ENCODE measurements at regions of chr1 and their contacts with region 1.

Region 1: DNA sequence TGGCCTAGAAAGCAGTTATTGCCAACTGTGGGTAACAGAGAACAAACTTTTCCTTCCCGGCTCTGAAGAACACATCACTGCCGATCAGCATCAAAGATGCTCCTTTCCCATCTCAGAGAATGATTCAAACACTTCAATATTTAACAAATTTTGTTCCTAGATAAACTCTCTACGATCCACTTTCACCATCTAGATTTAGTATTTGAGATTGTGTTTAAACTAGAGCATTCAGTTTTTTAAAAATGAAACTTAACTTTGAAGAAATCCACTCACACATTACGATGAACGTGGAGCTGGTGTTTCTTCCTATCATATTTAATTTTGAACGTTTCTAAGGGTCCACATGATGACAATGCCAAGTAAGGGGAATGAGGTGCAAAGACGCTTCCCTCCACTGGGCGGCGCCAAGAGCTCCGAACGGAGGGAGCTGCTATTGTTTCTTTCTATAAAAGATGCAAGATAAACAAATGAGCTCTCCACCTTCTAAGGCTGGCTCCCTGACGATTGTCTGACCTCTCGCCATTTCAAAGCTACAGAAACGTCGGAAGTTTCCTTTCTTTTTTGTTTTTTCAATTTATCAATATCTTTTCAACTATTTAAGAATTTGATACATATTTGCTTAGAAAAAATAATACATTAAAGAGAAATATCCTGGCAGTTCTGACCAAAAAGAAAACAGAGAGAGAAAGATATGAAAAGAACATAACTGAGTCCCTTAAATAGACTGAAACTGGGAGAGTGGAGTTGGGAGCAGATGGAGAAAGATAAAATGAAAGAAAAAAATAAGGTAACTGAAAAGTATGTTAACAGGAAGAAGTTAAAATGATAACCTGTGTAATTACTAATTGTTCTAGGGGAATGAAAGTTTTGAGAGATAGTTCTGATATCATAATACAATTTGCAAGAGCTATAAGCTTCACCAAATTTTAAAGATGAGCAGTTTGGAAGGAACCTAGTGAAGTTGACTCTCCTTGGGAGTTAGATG is 4.4 kb upstream of the BARHL2 start:
- DNase-seq: peak in 1 of 2 donors; percentile 61
- ATAC-seq: no peak
- H3K4me3 ChIP-seq: no peak overlapping the region
- H3K27ac ChIP-seq: no peak overlapping the region
- H3K4me1 ChIP-seq: peaks cover 29 to 55% (median 42%) of the 10 kb centered on the region in 9 donors
- H3K27me3 ChIP-seq: peaks cover 76 to 100% (median 100%) of the 10 kb centered on the region in 7 donors
- CTCF ChIP-seq: peak; percentile 43 to 87 (median 73)

Region 2: GRCh38 chr1:90114521-90115141 is 606.9 kb before region 1 on chr1:
- intact Hi-C with region 1: loop called in 1 of 10 experiments (anchors 10 kb)
- DNase-seq: no peak
- ATAC-seq: no peak
- H3K4me3 ChIP-seq: no peak overlapping the region
- H3K27ac ChIP-seq: no peak overlapping the region
- H3K4me1 ChIP-seq: no peaks in the 10 kb centered on the region
- H3K27me3 ChIP-seq: peaks cover 0 to 64% (median 31%) of the 10 kb centered on the region in 7 donors
- CTCF ChIP-seq: peak; percentile 19 to 77 (median 65)

Region 3: DNA sequence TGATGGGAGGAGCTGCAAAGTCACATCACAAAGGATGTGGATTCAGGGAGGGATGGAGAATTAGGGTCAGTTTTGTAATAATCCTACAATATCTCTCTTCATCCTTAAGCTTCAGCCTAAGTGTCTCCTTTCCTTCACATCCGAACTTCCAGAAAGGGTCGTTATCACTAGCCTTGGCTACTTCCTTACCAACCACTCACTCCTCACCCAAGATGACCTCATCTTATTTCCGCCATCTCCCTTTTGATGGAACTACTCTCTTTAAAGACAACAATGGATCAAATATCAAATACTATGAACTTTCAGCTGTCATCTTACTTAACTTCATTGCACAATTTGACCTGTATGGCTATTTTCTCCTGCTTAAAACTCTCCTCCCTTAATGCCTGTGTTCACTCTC is 65.2 kb after region 1 on chr1:
- intact Hi-C with region 1: no loop called
- DNase-seq: no peak
- ATAC-seq: no peak
- H3K4me3 ChIP-seq: no peak overlapping the region
- H3K27ac ChIP-seq: no peak overlapping the region
- H3K4me1 ChIP-seq: no peaks in the 10 kb centered on the region
- H3K27me3 ChIP-seq: peaks cover 0 to 5% (median 0%) of the 10 kb centered on the region in 7 donors
- CTCF ChIP-seq: no peak

Region 4: GRCh38 chr1:90841473-90841872 is 120.0 kb after region 1 on chr1:
- intact Hi-C with region 1: loop called in 1 of 10 experiments (anchors 10 kb)
- DNase-seq: no peak
- ATAC-seq: no peak
- H3K4me3 ChIP-seq: no peak overlapping the region
- H3K27ac ChIP-seq: no peak overlapping the region
- H3K4me1 ChIP-seq: peaks cover 0 to 1% (median 0%) of the 10 kb centered on the region in 9 donors
- H3K27me3 ChIP-seq: peaks cover 0 to 65% (median 42%) of the 10 kb centered on the region in 7 donors
- CTCF ChIP-seq: no peak

Region 5: DNA sequence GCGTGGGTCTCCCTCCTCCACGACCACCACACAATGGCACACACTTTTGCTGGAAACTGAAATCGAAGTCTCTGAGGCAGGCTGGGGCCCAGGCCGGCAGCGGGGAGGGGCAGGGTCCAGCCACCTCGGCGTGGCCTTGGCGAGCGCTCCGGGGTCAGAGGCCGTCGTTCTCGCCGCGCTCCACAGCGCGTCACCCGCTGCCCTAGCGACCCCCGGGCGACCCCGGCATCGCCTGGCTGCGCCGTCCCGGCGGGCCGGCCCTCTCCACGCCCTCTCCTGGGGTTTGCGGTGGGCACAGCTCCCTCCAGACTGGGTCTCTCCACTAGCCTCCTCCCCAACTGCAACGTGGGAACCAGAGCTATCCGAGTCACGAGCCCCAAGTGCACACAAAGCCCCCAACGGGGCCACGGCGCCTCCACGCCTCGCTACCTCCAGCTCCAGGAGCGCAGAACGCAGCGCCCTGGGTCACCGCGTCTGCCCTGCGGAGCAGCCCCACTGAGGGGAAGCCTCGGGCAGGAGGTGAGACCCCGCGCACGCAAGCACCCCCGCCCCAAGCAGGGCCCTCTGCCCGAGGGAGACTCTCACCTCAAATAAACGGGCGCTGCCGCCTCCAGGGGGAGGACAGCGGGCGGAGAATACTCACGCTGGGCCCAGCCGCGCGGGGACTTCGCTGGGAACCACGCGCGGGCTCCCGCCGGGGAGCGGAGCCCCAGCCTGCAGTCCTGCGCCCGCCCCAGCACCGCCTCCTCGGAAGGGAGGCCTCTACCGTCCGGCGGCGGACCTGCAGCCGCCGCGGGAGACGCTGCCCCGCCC is 129.6 kb after region 1 on chr1:
- intact Hi-C with region 1: loop called in 3 of 10 experiments (anchors 10 kb)
- DNase-seq: peak; percentile 78 to 87
- ATAC-seq: peak; percentile 97 to 99 (median 98)
- H3K4me3 ChIP-seq: peak overlapping the region; percentile 78 to 96 (median 88)
- H3K27ac ChIP-seq: peak overlapping the region in 8 of 10 donors; percentile 15 to 73 (median 52)
- H3K4me1 ChIP-seq: peaks cover 0 to 18% (median 9%) of the 10 kb centered on the region in 9 donors
- H3K27me3 ChIP-seq: peaks cover 0 to 37% (median 0%) of the 10 kb centered on the region in 7 donors
- CTCF ChIP-seq: peak; percentile 70 to 94 (median 93)

Region 6: GRCh38 chr1:90964444-90965035 is 243.0 kb after region 1 on chr1:
- intact Hi-C with region 1: loop called in 7 of 10 experiments (anchors 2 to 10 kb)
- DNase-seq: no peak
- ATAC-seq: peak in 1 of 8 donors; percentile 41
- H3K4me3 ChIP-seq: no peak overlapping the region
- H3K27ac ChIP-seq: no peak overlapping the region
- H3K4me1 ChIP-seq: peaks cover 0 to 27% (median 5%) of the 10 kb centered on the region in 9 donors
- H3K27me3 ChIP-seq: no peaks in the 10 kb centered on the region
- CTCF ChIP-seq: peak in 8 of 9 donors; percentile 32 to 64 (median 47)

Region 7: GRCh38 chr1:91021686-91022517 is 300.4 kb after region 1 on chr1 and contains the start of gene ZNF644:
- intact Hi-C with region 1: loop called in 2 of 10 experiments (anchors 10 kb)
- DNase-seq: peak; percentile 91
- ATAC-seq: peak; percentile 95 to 99 (median 96)
- H3K4me3 ChIP-seq: peak within 1 kb of the TSS; percentile 54 to 95 (median 86)
- H3K27ac ChIP-seq: peak within 1 kb of the TSS; percentile 98 to 100 (median 100)
- H3K4me1 ChIP-seq: peaks cover 0 to 53% (median 42%) of the 10 kb centered on the region in 9 donors
- H3K27me3 ChIP-seq: no peaks in the 10 kb centered on the region
- CTCF ChIP-seq: no peak
- total RNA-seq, gene ZNF644: 28.9 to 48.0 (median 34.0) TPM

Region 8: DNA sequence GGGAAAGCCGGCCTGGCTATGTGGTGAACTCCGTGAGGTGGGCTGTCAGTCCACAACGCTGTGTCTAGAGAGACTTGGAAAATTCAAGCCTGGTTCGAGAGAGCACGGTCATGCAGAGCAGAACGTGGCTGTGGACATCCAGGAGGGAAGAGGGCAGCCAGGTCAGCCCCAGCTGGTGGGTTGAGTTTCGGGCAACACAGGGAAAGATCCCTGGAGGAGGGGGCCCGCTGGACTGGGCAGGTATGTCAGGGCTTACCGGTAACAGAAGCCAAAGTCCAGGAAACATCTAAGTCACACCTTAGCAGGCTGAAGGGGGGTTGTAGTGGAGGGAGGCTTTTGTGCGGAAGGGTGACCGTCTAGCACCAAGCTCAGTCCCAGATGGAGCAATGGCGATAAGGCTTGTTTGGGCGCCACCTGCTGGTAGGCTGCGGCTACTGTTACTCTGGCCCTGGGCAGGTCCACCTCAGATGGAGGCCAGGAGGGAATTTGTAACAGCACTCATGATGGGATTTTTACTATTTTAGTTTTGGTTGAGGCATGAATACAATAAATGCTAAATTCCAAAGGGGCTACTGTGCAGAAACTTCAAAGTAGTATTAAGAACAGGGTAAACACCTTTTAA is 443.6 kb after region 1 on chr1:
- intact Hi-C with region 1: loop called in 4 of 10 experiments (anchors 5 to 10 kb)
- DNase-seq: peak; percentile 66 to 80
- ATAC-seq: peak; percentile 88 to 96 (median 93)
- H3K4me3 ChIP-seq: no peak overlapping the region
- H3K27ac ChIP-seq: no peak overlapping the region
- H3K4me1 ChIP-seq: no peaks in the 10 kb centered on the region
- H3K27me3 ChIP-seq: peaks cover 0 to 6% (median 0%) of the 10 kb centered on the region in 7 donors
- CTCF ChIP-seq: peak; percentile 71 to 96 (median 89)